A673 (cell line): ENCODE measurements at regions of chr6 and their contacts with region 1.

Region 1: DNA sequence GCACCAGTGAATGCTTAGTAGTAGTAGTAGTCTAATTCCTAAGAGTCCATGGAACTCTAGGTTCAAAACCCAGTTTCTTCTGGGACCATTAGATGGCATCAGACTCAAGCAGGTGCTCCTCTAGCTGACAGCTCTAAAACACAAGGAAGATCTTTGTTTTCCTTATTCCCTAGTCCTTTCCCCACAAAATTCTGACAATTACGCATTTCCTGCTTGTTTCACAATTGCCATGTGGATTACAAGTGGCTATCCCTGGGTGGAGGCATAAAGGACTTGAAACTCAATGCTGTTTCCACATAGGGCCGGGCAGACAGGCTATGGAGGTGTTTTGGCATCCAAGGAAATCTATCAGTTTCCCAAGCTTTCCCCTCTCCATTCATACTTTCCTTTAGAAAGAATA is 9.2 kb upstream of the HLA-DOB start:
- DNase-seq: peak; percentile 40
- H3K4me3 ChIP-seq: no peak overlapping the region
- H3K27ac ChIP-seq: no peak overlapping the region
- H3K4me1 ChIP-seq: no peaks in the 10 kb centered on the region
- H3K27me3 ChIP-seq: no peaks in the 10 kb centered on the region
- CTCF ChIP-seq: peak; percentile 49

Region 2: DNA sequence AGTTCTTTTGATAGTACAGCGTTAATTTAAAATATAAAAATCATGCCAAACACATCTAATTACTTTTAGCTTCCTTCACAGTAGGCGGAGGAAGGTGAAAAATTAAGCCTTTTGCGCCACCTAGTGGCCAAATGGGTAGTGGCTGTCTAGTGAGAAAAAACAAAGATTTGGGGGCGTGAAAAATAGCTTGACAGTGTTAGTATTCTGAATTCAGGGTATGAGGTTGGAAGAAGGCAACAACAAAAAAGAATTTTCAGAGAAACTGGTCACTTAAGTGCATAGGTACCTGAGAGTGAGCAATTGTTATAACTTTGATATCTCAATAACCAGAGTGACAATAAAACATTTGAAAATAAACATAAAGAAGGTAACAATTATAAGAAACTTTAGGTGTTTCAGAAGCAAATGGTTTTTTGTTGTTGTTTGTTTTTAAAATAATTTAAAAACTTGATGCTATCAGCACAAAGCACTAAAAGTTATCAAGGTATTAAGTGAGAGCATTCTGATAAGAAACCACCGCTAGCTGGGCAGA is 42.4 kb after region 1 on chr6:
- CTCF ChIA-PET with region 1: interaction called, 11 read pairs
- POLR2A ChIA-PET with region 1: no interaction called
- intact Hi-C with region 1: loop called (anchors 5 kb)
- DNase-seq: peak; percentile 84
- H3K4me3 ChIP-seq: no peak overlapping the region
- H3K27ac ChIP-seq: no peak overlapping the region
- H3K4me1 ChIP-seq: no peaks in the 10 kb centered on the region
- H3K27me3 ChIP-seq: peaks cover 50% of the 10 kb centered on the region
- CTCF ChIP-seq: peak; percentile 91

Region 3: DNA sequence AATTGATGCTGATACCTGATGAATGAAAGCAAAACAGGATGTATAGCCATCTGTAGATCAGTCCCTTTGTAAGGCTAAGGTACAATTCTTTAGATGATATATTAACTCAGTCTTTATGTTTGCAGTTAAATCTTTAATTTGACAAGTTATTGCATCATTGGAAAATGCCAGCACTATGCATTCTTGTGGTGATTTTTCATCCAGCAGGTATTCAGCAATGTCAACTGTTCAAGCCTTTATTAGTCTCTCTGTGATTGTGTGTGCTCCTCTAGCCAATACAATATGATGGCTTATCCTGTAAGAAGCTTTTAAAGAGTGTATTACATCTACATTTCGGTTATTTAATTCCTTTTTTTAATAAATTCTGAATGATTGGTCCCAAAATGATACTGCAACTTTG is 80.6 kb after region 1 on chr6:
- CTCF ChIA-PET with region 1: no interaction called
- POLR2A ChIA-PET with region 1: no interaction called
- intact Hi-C with region 1: no loop called
- DNase-seq: no peak
- H3K4me3 ChIP-seq: no peak overlapping the region
- H3K27ac ChIP-seq: no peak overlapping the region
- H3K4me1 ChIP-seq: no peaks in the 10 kb centered on the region
- H3K27me3 ChIP-seq: no peaks in the 10 kb centered on the region
- CTCF ChIP-seq: no peak